ENCODE measurements at regions of chrX and their contacts with region 1.

Region 1: GRCh38 chrX:100413229-100413628 is 3.2 kb upstream of the PCDH19 start:
- DNase-seq: peak; percentile 43
- H3K4me3 ChIP-seq: no peak overlapping the region
- H3K27ac ChIP-seq: no peak overlapping the region
- H3K4me1 ChIP-seq: no peaks in the 10 kb centered on the region
- H3K27me3 ChIP-seq: peaks cover 12% of the 10 kb centered on the region
- CTCF ChIP-seq: peak; percentile 28 to 59

Region 2: DNA sequence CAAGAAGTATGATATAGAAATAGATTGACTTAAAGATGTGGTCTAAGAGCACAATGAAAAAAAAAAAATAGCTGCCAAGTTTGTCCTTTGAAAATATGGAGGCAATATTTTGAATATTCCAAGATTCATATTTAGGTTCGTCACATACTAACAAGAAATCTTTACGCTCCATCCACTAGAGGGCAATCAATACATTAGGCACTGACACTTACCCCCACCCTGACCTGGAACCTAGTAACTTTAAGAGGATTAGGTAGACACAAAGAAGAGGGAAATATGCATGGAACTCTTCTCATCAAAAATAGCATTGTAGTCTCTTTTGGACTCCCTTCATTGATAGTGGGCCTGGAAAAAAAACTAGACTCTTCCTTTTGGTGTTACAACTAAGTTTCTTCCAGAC is 1111.2 kb before region 1 on chrX:
- CTCF ChIA-PET with region 1: no interaction called
- dilution Hi-C with region 1: no loop called
- in situ Hi-C with region 1: no loop called
- intact Hi-C with region 1: loop called (anchors 2 kb)
- DNase-seq: no peak
- H3K4me3 ChIP-seq: no peak overlapping the region
- H3K27ac ChIP-seq: no peak overlapping the region
- H3K4me1 ChIP-seq: no peaks in the 10 kb centered on the region
- H3K27me3 ChIP-seq: no peaks in the 10 kb centered on the region
- CTCF ChIP-seq: peak; percentile 21 to 50

Region 3: DNA sequence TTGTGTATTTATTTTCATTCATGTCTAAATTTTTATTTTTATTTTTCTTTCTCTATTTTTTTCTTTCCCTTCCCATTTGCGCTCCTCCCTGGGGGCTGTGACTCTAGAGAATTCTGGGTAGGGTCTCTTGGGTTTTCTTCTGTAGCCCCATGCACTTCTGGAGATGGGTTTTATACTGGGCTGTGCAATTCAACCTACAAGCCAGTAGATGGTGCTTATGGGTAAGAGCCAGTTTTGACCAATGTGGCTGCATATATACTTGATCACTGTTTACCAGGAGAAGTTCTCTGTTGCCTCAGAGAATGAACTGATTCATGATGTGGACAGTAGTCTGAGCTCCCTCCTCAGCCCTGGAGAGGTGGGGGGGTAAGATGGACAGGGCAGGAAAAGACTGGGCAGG is 617.7 kb before region 1 on chrX:
- CTCF ChIA-PET with region 1: no interaction called
- dilution Hi-C with region 1: no loop called
- in situ Hi-C with region 1: no loop called
- intact Hi-C with region 1: loop called (anchors 2 kb)
- DNase-seq: no peak
- H3K4me3 ChIP-seq: no peak overlapping the region
- H3K27ac ChIP-seq: no peak overlapping the region
- H3K4me1 ChIP-seq: no peaks in the 10 kb centered on the region
- H3K27me3 ChIP-seq: no peaks in the 10 kb centered on the region
- CTCF ChIP-seq: peak in 1 of 2 donors; percentile 24

Region 4: DNA sequence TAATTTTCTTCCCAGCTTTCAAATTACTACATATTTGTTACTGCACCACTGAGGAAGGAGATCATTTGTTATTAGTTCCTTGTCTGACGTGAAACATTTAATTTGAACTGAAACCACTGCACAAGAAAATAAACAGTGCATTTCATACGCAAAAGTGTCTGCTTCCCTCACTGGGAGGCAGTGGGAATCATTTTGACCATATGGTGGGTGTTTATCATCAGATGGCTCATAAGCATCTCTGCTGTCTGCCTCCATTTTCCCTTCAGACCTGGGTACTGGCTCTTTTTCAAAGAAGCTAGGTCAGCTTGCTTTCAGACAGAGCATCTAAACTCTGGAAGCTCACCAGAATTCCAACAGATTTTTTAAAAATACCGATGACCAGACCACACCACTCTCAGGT is 138.3 kb before region 1 on chrX:
- CTCF ChIA-PET with region 1: no interaction called
- dilution Hi-C with region 1: no loop called
- in situ Hi-C with region 1: no loop called
- intact Hi-C with region 1: no loop called
- DNase-seq: no peak
- H3K4me3 ChIP-seq: no peak overlapping the region
- H3K27ac ChIP-seq: no peak overlapping the region
- H3K4me1 ChIP-seq: no peaks in the 10 kb centered on the region
- H3K27me3 ChIP-seq: no peaks in the 10 kb centered on the region
- CTCF ChIP-seq: no peak

Measured in mammary epithelial cell (primary cell).